HEK293 (cell line): ENCODE measurements at regions of chr11 and their contacts with region 1.

Region 1: GRCh38 chr11:62841361-62842184 is 2.2 kb upstream of the WDR74 start:
- H3K4me3 ChIP-seq: peak overlapping the region; percentile 42
- H3K27ac ChIP-seq: peak overlapping the region; percentile 92
- H3K4me1 ChIP-seq: no peaks in the 10 kb centered on the region
- CTCF ChIP-seq: 0 out of 2 replicates have a peak, but pooled peaks have one; percentile 37

Region 2: GRCh38 chr11:62621567-62622470 is 219.8 kb before region 1 on chr11 and contains the start of gene B3GAT3:
- CTCF ChIA-PET with region 1: no interaction called
- POLR2A ChIA-PET with region 1: interaction called, 13 read pairs
- H3K4me3 ChIP-seq: peak within 1 kb of the TSS; percentile 71
- H3K27ac ChIP-seq: peak within 1 kb of the TSS; percentile 80
- H3K4me1 ChIP-seq: no peaks in the 10 kb centered on the region
- CTCF ChIP-seq: peak; percentile 5; the same call in 1 of the 2 replicates

Region 3: GRCh38 chr11:62705880-62706849 is 135.4 kb before region 1 on chr11:
- CTCF ChIA-PET with region 1: no interaction called
- POLR2A ChIA-PET with region 1: interaction called, 15 read pairs
- H3K4me3 ChIP-seq: peak overlapping the region; percentile 62
- H3K27ac ChIP-seq: peak overlapping the region; percentile 62
- H3K4me1 ChIP-seq: peaks cover 3% of the 10 kb centered on the region; the same call in 1 of the 2 replicates
- CTCF ChIP-seq: no peak

Region 4: GRCh38 chr11:62771144-62772021 is 70.2 kb before region 1 on chr11 and contains the start of gene TAF6L:
- CTCF ChIA-PET with region 1: no interaction called
- POLR2A ChIA-PET with region 1: interaction called, 33 read pairs
- H3K4me3 ChIP-seq: peak within 1 kb of the TSS; percentile 71
- H3K27ac ChIP-seq: peak within 1 kb of the TSS; percentile 72
- H3K4me1 ChIP-seq: no peaks in the 10 kb centered on the region
- CTCF ChIP-seq: no peak; the same call in 1 of the 2 replicates

Region 5: DNA sequence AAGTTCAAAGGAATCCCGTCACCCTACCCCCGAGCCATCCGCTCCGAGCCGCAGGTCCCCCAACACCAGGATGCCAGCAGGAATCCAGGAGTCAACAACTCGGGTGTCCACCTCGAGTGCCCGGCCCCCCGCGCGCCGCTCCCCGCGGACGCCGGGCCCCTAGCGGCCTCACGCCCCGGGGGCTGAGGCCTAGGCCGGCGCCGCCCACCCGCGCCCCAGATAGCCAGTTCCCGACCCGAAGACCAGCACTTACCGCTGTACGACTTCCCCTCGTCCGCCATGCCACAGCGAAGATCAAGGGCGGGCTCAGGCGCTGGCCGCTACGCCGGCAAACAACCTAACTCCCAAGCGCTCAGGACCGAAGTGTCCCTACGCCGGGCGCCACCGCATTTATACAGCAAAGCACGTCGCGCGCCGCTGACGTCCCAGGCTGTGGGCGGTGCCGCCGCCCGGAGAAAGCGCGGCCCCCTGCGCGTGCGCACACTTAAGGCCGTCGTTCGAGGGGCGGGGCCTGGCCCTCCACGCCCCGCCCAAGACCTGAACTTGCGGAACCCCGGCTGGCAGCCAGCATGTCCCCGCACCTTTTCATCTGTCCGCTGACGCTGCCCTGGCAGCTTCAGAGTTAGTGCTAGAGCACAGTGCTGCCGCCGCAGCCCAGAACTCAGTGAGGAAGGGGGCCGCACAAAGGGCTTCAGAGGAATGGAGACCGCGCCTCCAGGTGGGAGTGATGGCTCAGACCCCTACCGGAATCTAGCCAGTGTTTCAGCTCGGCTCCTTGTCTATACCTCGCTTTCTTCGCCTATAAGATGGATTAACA is 36.3 kb before region 1 on chr11 and contains the start of gene NXF1:
- CTCF ChIA-PET with region 1: no interaction called
- POLR2A ChIA-PET with region 1: interaction called, 21 read pairs
- H3K4me3 ChIP-seq: peak within 1 kb of the TSS; percentile 84
- H3K27ac ChIP-seq: peak within 1 kb of the TSS; percentile 63
- H3K4me1 ChIP-seq: no peaks in the 10 kb centered on the region
- CTCF ChIP-seq: no peak

Region 6: DNA sequence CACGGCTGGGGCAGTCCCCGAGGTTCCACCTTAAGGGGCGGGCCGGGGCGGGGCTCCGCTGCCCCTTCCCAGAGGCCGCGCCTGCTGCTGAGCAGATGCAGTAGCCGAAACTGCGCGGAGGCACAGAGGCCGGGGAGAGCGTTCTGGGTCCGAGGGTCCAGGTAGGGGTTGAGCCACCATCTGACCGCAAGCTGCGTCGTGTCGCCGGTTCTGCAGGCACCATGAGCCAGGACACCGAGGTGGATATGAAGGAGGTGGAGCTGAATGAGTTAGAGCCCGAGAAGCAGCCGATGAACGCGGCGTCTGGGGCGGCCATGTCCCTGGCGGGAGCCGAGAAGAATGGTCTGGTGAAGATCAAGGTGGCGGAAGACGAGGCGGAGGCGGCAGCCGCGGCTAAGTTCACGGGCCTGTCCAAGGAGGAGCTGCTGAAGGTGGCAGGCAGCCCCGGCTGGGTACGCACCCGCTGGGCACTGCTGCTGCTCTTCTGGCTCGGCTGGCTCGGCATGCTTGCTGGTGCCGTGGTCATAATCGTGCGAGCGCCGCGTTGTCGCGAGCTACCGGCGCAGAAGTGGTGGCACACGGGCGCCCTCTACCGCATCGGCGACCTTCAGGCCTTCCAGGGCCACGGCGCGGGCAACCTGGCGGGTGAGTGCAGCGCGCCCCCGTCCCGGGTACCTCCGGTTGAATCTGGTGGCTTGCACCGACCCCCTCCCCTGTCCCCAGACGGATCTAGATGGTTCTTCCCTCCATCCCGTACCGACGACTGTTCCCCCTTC is 39.4 kb after region 1 on chr11 and contains the start of gene SLC3A2:
- CTCF ChIA-PET with region 1: no interaction called
- POLR2A ChIA-PET with region 1: interaction called, 91 read pairs
- H3K4me3 ChIP-seq: peak within 1 kb of the TSS; percentile 93
- H3K27ac ChIP-seq: peak within 1 kb of the TSS; percentile 98
- H3K4me1 ChIP-seq: no peaks in the 10 kb centered on the region
- CTCF ChIP-seq: peak; percentile 97